B cell (primary cell): ENCODE measurements at regions of chr18 and their contacts with region 1.

Region 1: DNA sequence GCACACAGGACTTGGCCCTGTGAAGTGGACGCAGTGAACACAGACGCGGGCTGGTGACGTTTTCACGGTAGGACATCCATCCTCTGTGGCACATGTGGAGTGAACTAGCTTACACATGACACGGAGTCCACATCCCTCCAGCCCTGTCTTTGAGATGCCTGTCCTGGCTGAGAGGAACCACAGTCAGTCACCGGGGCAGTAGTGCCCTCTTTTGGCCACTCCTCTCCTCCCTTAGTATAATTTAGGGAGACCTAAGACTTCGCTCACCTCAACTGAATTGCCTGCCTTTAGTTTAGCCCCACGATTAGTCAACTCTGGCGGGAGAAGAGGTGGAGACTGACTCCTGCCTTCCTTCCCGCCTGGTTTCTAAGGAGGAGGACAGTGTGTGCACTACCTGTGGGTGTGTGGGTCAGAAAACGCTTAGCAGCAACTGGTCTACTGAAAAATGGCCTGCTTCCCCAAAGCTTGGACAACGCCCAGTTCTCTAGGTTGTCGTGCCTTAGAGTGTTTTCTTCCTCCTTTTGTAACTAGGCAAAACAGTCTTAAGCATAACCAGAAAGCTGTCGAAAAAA is 70.6 kb downstream of the MBP start:
- DNase-seq: peak; percentile 87
- ATAC-seq: peak; percentile 50
- H3K4me3 ChIP-seq: no peak overlapping the region
- H3K4me3 Mint-ChIP-seq: peak overlapping the region; percentile 77
- H3K27ac ChIP-seq: peak overlapping the region; percentile 91 to 97
- H3K27ac Mint-ChIP-seq: peak overlapping the region; percentile 100
- H3K4me1 ChIP-seq: peaks cover 77 to 80% of the 10 kb centered on the region in 2 donors
- H3K4me1 Mint-ChIP-seq: peaks cover 80% of the 10 kb centered on the region
- H3K27me3 ChIP-seq: no peaks in the 10 kb centered on the region
- H3K27me3 Mint-ChIP-seq: no peaks in the 10 kb centered on the region
- CTCF ChIP-seq: no peak

Region 2: DNA sequence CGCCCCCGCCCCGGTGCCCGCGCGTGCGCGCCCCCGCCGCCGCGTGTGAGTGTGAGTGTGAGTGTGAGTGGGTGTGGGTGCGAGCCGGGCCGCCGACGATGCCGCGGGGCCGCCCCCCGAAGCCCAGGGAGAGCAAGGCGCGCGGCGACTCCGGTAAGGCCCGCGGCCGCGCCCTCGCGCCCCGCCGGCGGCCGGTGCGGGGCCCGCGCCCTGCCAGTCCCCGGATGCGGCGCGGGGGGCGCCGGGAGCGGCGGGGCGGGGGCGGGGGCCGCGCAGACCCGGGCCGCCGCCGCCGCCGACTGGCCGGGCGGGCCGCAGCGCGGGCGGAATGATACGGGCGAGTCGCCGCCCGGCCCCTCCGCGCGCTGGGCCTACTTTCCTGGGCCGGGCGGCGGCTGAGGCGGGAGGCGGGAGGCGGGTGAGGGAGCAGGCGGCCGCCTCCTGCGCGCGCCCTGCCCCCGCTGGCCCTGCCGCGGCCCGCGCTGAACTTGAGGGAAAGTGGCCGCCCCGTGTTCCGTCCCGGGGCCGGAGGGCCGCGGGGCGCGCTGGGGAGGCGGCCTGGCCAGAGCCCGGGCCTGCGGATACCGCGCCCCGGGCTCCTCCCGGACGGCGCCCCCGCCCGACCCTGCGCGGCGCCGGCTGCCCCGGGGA is 239.4 kb before region 1 on chr18 and contains the start of gene ZNF236:
- CTCF ChIA-PET with region 1: no interaction called
- POLR2A ChIA-PET with region 1: interaction called, 9 read pairs
- intact Hi-C with region 1: loop called (anchors 5 kb)
- DNase-seq: peak; percentile 89
- ATAC-seq: peak; percentile 60
- H3K4me3 ChIP-seq: peak within 1 kb of the TSS; percentile 75 to 98 (median 95)
- H3K4me3 Mint-ChIP-seq: peak within 1 kb of the TSS; percentile 95
- H3K27ac ChIP-seq: peak within 1 kb of the TSS; percentile 85 to 90
- H3K27ac Mint-ChIP-seq: peak within 1 kb of the TSS; percentile 97
- H3K4me1 ChIP-seq: peaks cover 19 to 45% of the 10 kb centered on the region in 2 donors
- H3K4me1 Mint-ChIP-seq: peaks cover 60% of the 10 kb centered on the region
- H3K27me3 ChIP-seq: no peaks in the 10 kb centered on the region
- H3K27me3 Mint-ChIP-seq: no peaks in the 10 kb centered on the region
- CTCF ChIP-seq: no peak
- total RNA-seq, gene ZNF236: 39.2 and 39.5 TPM in 2 replicates

Region 3: DNA sequence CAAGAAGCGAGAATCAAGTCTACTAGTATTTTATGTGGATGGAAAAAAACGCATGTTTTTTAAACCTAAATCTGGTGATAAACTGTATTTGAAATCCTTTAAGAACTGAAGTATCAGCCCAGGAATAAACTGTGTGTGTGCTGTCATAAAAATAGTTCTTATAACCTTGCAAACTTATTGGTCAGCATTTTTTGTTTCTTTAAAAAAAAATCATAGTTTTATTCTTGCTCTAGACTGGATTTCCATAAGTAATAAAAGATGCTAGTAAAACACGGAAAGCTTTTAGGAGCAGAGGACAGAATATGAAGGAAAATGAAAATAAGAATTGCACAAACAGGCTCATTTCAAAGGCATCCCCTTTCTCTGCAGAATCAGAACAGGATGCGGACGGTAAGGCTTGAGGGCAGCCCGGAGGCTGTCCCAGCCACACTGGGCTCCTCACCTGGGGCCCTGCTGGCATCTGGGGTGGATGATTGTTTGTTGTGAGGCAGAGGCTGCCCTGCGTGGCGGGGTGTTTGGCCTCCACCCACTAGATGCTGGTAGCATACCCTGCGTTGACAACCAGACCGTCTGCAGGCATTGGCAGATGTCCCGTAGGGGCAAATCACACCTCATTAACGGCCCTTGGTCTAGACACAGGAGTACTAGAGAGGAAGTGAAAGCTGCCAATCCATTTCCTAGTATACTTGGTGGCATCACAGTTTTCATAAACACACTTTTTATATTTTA is 18.1 kb after region 1 on chr18:
- CTCF ChIA-PET with region 1: interaction called, 21 read pairs
- POLR2A ChIA-PET with region 1: interaction called, 12 read pairs
- intact Hi-C with region 1: loop called (anchors 1 kb)
- DNase-seq: peak; percentile 91
- ATAC-seq: peak; percentile 98
- H3K4me3 ChIP-seq: peak overlapping the region in 1 of 5 experiments; percentile 38
- H3K4me3 Mint-ChIP-seq: peak overlapping the region; percentile 70
- H3K27ac ChIP-seq: peak overlapping the region in 1 of 2 donors; percentile 87
- H3K27ac Mint-ChIP-seq: peak overlapping the region; percentile 94
- H3K4me1 ChIP-seq: peaks cover 18 to 27% of the 10 kb centered on the region in 2 donors
- H3K4me1 Mint-ChIP-seq: peaks cover 66% of the 10 kb centered on the region
- H3K27me3 ChIP-seq: no peaks in the 10 kb centered on the region
- H3K27me3 Mint-ChIP-seq: no peaks in the 10 kb centered on the region
- CTCF ChIP-seq: no peak

Region 4: GRCh38 chr18:77323640-77324299 is 261.7 kb after region 1 on chr18:
- CTCF ChIA-PET with region 1: no interaction called
- POLR2A ChIA-PET with region 1: no interaction called
- intact Hi-C with region 1: no loop called
- DNase-seq: no peak
- ATAC-seq: no peak
- H3K4me3 ChIP-seq: no peak overlapping the region
- H3K4me3 Mint-ChIP-seq: no peak overlapping the region
- H3K27ac ChIP-seq: no peak overlapping the region
- H3K27ac Mint-ChIP-seq: no peak overlapping the region
- H3K4me1 ChIP-seq: no peaks in the 10 kb centered on the region
- H3K4me1 Mint-ChIP-seq: no peaks in the 10 kb centered on the region
- H3K27me3 ChIP-seq: peaks cover 0 to 3% (median 1%) of the 10 kb centered on the region in 4 experiments
- H3K27me3 Mint-ChIP-seq: peaks cover 26% of the 10 kb centered on the region
- CTCF ChIP-seq: no peak